ENCODE measurements at regions of chr3 and their contacts with region 1.

Region 1: GRCh38 chr3:42804106-42804830 is at the start of gene HIGD1A:
- DNase-seq: peak; percentile 94
- ATAC-seq: peak; percentile 97
- H3K4me3 Mint-ChIP-seq: peak within 1 kb of the TSS; percentile 95
- H3K27ac Mint-ChIP-seq: peak within 1 kb of the TSS; percentile 83
- H3K4me1 Mint-ChIP-seq: peaks cover 37% of the 10 kb centered on the region
- H3K27me3 Mint-ChIP-seq: peaks cover 22% of the 10 kb centered on the region
- CTCF ChIP-seq: no peak
- total RNA-seq, gene HIGD1A: 74.6 to 80.7 TPM (median 76.2 TPM) in 3 replicates

Region 2: GRCh38 chr3:42819351-42819965 is 15.2 kb after region 1 on chr3:
- CTCF ChIA-PET with region 1: interaction called, 10 read pairs
- POLR2A ChIA-PET with region 1: interaction called, 3 read pairs
- DNase-seq: peak; percentile 40
- ATAC-seq: peak; percentile 92
- H3K4me3 Mint-ChIP-seq: no peak overlapping the region
- H3K27ac Mint-ChIP-seq: no peak overlapping the region
- H3K4me1 Mint-ChIP-seq: peaks cover 14% of the 10 kb centered on the region
- H3K27me3 Mint-ChIP-seq: no peaks in the 10 kb centered on the region; the same call in 1 of the 2 replicates
- CTCF ChIP-seq: no peak